Heart right ventricle (tissue), 16 donors: ENCODE measurements at regions of chr19 and their contacts with region 1.

Region 1: GRCh38 chr19:15264061-15264932 is 32.0 kb upstream of the EPHX3 start:
- DNase-seq: peak; percentile 75 to 76
- ATAC-seq: peak; percentile 9 to 52 (median 42)
- H3K4me3 ChIP-seq: no peak overlapping the region
- H3K27ac ChIP-seq: peak overlapping the region in 9 of 10 donors; percentile 41 to 81 (median 56)
- H3K4me1 ChIP-seq: peaks cover 27 to 64% (median 59%) of the 10 kb centered on the region in 9 donors
- H3K27me3 ChIP-seq: no peaks in the 10 kb centered on the region
- CTCF ChIP-seq: peak; percentile 51 to 85 (median 81)

Region 2: DNA sequence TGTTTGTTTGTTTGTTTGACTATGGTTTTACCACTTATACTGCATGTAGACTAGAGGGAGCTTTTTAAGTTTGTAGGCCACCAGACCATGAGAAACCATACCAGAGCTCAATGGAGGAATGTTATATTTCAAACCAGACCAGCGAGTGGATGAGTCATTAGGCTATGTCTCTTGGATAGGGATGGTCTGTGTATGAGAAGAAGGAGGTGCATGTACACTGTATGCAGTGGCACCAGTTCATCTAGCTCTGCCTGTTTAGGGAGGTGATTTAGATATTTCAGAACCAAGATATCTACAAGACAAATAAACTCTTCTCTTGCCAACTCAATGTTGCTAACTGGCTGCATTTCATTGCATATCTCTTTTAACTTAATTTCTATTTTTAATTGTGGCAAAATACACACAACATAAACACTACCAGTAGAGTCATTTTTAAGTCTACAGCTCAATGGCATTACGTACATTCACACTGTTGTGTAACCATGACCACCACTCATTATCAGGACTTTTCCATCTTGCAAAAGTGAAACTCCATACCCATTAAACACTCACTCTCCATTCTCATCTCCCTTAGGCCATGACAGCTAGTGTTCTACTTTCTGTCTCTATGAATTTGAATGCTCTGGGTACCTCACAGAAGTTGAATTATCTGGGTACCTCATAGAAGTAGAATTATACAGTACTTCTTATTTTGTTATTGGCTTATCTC is 127.9 kb before region 1 on chr19:
- intact Hi-C with region 1: no loop called
- DNase-seq: no peak
- ATAC-seq: no peak
- H3K4me3 ChIP-seq: no peak overlapping the region
- H3K27ac ChIP-seq: no peak overlapping the region
- H3K4me1 ChIP-seq: no peaks in the 10 kb centered on the region
- H3K27me3 ChIP-seq: no peaks in the 10 kb centered on the region
- CTCF ChIP-seq: no peak

Region 3: DNA sequence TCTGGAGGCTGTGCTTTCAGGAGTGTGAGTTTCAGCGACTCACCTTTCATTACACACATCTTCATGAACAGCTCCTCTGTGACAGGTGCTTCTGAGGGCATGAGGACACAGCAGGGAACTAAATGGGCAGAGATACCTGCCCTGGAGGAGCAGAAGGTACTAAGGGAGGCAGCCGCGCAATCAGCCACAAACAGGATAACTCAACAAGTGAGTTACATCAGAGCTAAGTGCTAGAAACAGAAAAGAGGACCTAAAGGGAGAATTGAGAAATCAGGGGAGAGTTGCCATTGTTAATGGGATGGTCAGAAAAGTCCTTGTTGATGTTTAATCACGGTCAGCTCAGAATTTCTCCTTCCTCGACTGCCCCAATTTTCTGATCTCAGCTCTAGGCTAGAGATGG is 114.6 kb before region 1 on chr19:
- intact Hi-C with region 1: no loop called
- DNase-seq: no peak
- ATAC-seq: no peak
- H3K4me3 ChIP-seq: no peak overlapping the region
- H3K27ac ChIP-seq: no peak overlapping the region
- H3K4me1 ChIP-seq: peaks cover 0 to 3% (median 0%) of the 10 kb centered on the region in 9 donors
- H3K27me3 ChIP-seq: peaks cover 0 to 4% (median 0%) of the 10 kb centered on the region in 7 donors
- CTCF ChIP-seq: no peak

Region 4: DNA sequence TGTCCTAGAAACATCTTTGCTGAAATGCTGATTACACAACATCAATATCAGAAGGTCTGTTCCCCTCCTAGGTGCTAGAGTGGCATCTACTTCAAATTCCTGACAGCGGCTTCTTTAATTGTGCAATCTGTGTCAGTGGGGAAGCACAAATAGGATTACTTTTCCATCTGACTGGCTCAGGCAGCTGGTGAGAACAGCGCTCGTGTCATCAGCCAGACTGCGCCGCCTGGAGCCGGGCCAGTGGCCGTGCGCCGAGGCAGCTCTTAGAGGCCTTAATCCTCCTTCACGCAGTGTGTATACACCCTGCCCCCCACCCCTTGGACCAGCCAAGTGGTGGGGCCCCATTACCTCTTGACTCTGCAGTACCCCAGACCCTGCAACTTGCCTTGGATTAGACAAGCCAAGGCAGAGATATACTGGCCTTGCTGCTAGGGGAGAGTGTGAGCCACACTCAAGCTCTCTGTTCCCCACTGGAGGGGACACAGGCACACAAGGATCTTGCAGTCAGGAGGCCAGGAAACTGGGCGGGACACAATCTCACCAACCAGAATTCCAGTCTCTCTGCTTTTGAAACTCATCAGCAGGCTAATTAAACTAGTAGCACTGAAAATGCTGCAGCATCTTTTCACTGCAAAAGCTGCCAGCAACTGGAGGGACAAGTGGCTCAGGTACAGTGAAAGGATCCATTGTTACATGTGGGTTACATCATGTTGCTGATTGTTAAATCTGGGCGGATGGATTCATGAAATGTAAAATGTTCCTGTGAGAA is 16.8 kb after region 1 on chr19:
- intact Hi-C with region 1: loop called in 1 of 10 experiments (anchors 2 kb)
- DNase-seq: peak; percentile 83 to 88
- ATAC-seq: peak; percentile 86 to 93 (median 90)
- H3K4me3 ChIP-seq: peak overlapping the region in 1 of 10 donors; percentile 16
- H3K27ac ChIP-seq: peak overlapping the region in 9 of 10 donors; percentile 11 to 81 (median 62)
- H3K4me1 ChIP-seq: peaks cover 66 to 100% (median 100%) of the 10 kb centered on the region in 9 donors
- H3K27me3 ChIP-seq: no peaks in the 10 kb centered on the region
- CTCF ChIP-seq: peak in 7 of 9 donors; percentile 14 to 56 (median 39)

Region 5: DNA sequence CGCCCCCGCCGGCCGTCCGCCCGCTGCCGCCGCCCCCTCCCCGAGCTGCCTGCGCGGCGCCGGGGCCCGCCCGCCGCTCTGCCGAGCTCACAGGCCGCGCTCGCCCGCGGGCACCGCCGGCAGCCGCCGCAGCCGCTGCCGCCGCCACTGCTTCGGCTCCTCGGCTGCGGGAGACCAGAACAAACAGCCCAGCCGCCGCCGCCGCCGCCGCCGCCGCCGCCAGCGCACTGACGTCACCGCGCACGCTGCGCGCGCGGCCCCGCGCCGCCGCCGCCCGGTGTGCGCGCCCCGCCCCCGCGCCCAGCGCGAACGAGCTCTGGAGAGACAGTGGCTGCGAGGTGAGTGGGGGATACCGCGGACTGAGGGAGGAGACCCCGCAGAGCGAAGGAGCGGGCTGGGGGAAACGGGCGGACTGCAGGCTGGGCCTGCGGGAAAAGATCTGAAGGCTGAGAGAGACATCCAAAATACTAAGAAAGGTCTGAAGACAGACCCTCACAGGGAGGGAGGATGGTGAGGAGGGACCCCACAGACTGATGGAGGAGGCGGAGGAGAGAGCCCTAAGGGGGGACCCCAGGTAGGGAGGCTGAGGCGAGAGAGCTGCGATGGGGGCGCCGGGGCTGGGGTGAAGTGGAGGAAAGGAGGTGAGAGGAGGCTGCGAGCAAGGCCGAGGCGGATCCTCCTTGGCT is 68.2 kb after region 1 on chr19 and contains the start of gene BRD4:
- intact Hi-C with region 1: loop called in 5 of 10 experiments (anchors 5 to 10 kb)
- DNase-seq: peak; percentile 64 to 80
- ATAC-seq: peak; percentile 69 to 86 (median 81)
- H3K4me3 ChIP-seq: peak within 1 kb of the TSS; percentile 90 to 99 (median 96)
- H3K27ac ChIP-seq: peak within 1 kb of the TSS; percentile 84 to 96 (median 93)
- H3K4me1 ChIP-seq: peaks cover 5 to 76% (median 55%) of the 10 kb centered on the region in 9 donors
- H3K27me3 ChIP-seq: no peaks in the 10 kb centered on the region
- CTCF ChIP-seq: no peak
- total RNA-seq, gene BRD4: 51.6 to 85.1 (median 54.7) TPM

Region 6: GRCh38 chr19:15379083-15379995 is 115.0 kb after region 1 on chr19 and contains the start of gene AKAP8:
- intact Hi-C with region 1: loop called in 5 of 10 experiments (anchors 2 to 10 kb)
- DNase-seq: peak; percentile 98 to 99
- ATAC-seq: peak; percentile 94 to 97 (median 97)
- H3K4me3 ChIP-seq: peak within 1 kb of the TSS; percentile 58 to 99 (median 90)
- H3K27ac ChIP-seq: peak within 1 kb of the TSS; percentile 93 to 99 (median 98)
- H3K4me1 ChIP-seq: peaks cover 26 to 50% (median 47%) of the 10 kb centered on the region in 9 donors
- H3K27me3 ChIP-seq: no peaks in the 10 kb centered on the region
- CTCF ChIP-seq: no peak
- total RNA-seq, gene AKAP8: 15.7 to 32.2 (median 18.6) TPM